IMR-90 (cell line): ENCODE measurements at regions of chr18 and their contacts with region 1.

Region 1: DNA sequence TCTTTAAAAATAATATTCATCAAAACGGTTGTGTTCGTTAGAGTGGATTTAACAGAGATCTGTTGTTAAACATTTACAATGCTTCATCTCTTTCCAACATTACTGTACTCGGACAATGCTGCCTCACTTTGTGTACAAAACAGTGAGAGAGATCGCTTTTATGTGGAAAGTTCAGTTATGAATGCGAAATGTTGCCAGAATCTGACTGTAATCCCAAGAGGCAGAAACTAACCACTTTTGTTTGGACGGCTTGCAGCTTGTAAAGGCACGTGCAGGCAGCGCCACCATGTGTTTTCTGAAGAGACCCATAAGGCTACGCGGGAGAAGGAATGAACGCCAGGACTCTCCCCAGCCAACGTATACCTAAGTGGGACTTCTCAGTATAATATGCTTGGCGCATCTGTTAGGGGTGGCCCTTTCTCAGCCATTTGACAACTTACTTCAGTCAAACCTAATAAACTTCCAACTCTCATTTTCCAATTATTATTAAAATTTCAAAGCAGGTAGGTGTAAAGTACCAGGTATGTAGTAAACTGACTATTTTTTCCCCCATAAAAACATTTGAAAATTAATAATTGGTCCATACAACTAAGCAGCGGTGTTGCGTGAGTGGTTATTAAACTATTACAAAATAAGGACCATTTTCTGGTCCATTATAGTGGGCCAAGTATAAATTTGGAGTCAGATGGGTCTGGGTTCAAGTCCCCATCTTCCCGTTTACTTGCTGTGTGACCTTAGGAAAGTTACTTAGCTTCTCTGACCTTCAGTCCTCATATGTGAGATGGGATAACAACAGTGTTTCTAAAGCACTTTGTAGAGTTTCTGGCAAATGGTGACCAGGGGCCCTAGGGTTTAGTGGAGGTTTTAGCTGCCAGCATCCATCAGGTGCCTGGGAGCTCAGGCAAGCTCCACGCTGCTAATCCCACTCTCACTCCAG is 5.6 kb upstream of the NAPG start:
- DNase-seq: peak; percentile 92
- ATAC-seq: peak; percentile 91
- H3K4me3 ChIP-seq: peak overlapping the region; percentile 12; the same call in 1 of the 2 replicates
- H3K27ac ChIP-seq: no peak overlapping the region
- H3K4me1 ChIP-seq: peaks cover 8% of the 10 kb centered on the region
- H3K27me3 ChIP-seq: peaks cover 10% of the 10 kb centered on the region; the same call in 1 of the 2 replicates
- CTCF ChIP-seq: peak; percentile 97
- POLR2A ChIP-seq: 0 out of 2 replicates have a peak, but pooled peaks have one; percentile 29
- RAD21 ChIP-seq: peak; percentile 99

Region 2: DNA sequence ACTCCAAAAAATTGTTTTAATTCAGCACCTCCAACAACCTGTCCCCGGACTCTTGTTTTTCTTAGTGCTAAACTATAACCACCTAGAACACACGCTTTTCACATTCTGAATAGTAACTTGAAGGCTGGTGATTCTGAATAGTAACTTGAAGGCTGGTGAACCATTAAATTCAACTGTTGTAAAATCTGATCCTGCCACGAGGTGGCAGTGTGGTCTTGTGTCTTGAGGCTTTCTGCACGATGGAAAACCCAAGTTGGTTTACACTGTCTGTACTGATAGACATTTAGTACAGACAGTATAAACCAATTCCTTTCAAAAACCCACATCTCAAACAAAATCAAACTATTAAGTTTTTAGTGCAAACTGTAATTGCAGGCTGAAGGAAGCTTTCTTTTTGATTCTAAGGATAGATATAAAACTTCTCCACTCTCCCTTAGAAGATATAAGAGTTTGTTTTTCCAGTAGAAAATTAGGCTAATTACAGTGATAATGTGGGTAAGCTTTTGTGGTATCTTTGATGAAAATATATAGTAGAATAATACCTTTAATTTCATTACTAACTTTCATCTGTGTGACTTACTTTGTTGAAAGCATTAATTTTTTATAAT is 548.9 kb before region 1 on chr18:
- CTCF ChIA-PET with region 1: interaction called, 20 read pairs
- POLR2A ChIA-PET with region 1: interaction called, 4 read pairs
- dilution Hi-C with region 1: loop called (anchors 25 kb)
- in situ Hi-C with region 1: loop called (anchors 5 kb)
- intact Hi-C with region 1: loop called (anchors 1 kb)
- DNase-seq: peak; percentile 81
- ATAC-seq: peak; percentile 87
- H3K4me3 ChIP-seq: no peak overlapping the region
- H3K27ac ChIP-seq: no peak overlapping the region
- H3K4me1 ChIP-seq: peaks cover 8% of the 10 kb centered on the region
- H3K27me3 ChIP-seq: peaks cover 2% of the 10 kb centered on the region; the same call in 1 of the 2 replicates
- CTCF ChIP-seq: peak; percentile 88
- POLR2A ChIP-seq: 0 out of 2 replicates have a peak, but pooled peaks have one; percentile 40
- RAD21 ChIP-seq: peak; percentile 99

Region 3: DNA sequence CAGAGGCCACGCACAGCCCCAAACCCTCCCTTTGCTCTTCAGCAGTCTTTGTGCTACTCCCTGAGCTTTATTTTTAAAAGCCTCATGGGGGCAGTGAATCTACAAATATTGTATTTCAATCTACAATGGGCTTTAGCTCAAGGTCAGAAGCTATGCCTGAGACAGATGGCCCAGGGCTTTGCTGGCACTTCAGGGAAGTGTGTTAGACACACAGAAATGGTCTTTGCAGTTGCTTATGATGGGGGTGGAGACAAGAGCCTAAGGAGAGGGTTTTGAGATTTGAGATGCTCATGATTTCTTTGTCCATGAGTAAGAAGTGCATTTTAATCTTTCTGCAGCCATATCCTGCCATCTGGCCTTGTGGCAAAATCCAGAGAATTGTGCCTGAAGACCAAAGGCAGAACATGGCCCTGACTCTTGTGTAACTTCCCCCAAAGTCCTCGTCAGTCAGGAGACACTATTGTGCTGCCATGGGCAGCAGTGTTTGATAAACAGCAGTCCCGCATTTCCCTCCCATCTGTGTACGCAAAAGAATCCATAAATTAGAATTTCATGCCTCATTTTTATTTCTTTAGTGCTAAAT is 513.9 kb before region 1 on chr18:
- CTCF ChIA-PET with region 1: interaction called, 10 read pairs
- POLR2A ChIA-PET with region 1: interaction called, 4 read pairs
- dilution Hi-C with region 1: no loop called
- in situ Hi-C with region 1: no loop called
- intact Hi-C with region 1: loop called (anchors 1 kb)
- DNase-seq: peak; percentile 28
- ATAC-seq: no peak; the same call in 1 of the 2 replicates
- H3K4me3 ChIP-seq: no peak overlapping the region
- H3K27ac ChIP-seq: no peak overlapping the region
- H3K4me1 ChIP-seq: peaks cover 5% of the 10 kb centered on the region; the same call in 1 of the 2 replicates
- H3K27me3 ChIP-seq: peaks cover 11% of the 10 kb centered on the region
- CTCF ChIP-seq: peak; percentile 37
- POLR2A ChIP-seq: no peak
- RAD21 ChIP-seq: peak; percentile 45

Region 4: GRCh38 chr18:10121786-10122542 is 398.3 kb before region 1 on chr18:
- CTCF ChIA-PET with region 1: no interaction called
- POLR2A ChIA-PET with region 1: no interaction called
- dilution Hi-C with region 1: no loop called
- in situ Hi-C with region 1: no loop called
- intact Hi-C with region 1: loop called (anchors 5 kb)
- DNase-seq: peak; percentile 86
- ATAC-seq: peak; percentile 94
- H3K4me3 ChIP-seq: no peak overlapping the region
- H3K27ac ChIP-seq: peak overlapping the region; percentile 80; the same call in 1 of the 2 replicates
- H3K4me1 ChIP-seq: peaks cover 14% of the 10 kb centered on the region
- H3K27me3 ChIP-seq: no peaks in the 10 kb centered on the region; the same call in 1 of the 2 replicates
- CTCF ChIP-seq: no peak
- POLR2A ChIP-seq: no peak
- RAD21 ChIP-seq: no peak

Region 5: GRCh38 chr18:10230072-10230471 is 290.2 kb before region 1 on chr18:
- CTCF ChIA-PET with region 1: no interaction called
- POLR2A ChIA-PET with region 1: no interaction called
- dilution Hi-C with region 1: no loop called
- in situ Hi-C with region 1: no loop called
- intact Hi-C with region 1: loop called (anchors 10 kb)
- DNase-seq: peak; percentile 83
- ATAC-seq: peak; percentile 47; the same call in 1 of the 2 replicates
- H3K4me3 ChIP-seq: no peak overlapping the region
- H3K27ac ChIP-seq: no peak overlapping the region
- H3K4me1 ChIP-seq: peaks cover 4% of the 10 kb centered on the region
- H3K27me3 ChIP-seq: no peaks in the 10 kb centered on the region
- CTCF ChIP-seq: peak; percentile 34
- POLR2A ChIP-seq: no peak
- RAD21 ChIP-seq: peak; percentile 34; the same call in 1 of the 2 replicates